ENCODE measurements at regions of chr1 and their contacts with region 1.

Region 1: GRCh38 chr1:109773146-109773899 is 9.6 kb upstream of the EPS8L3 start:
- DNase-seq: peak; percentile 90
- ATAC-seq: peak; percentile 89
- H3K4me3 ChIP-seq: no peak overlapping the region
- H3K27ac ChIP-seq: no peak overlapping the region
- H3K4me1 ChIP-seq: no peaks in the 10 kb centered on the region
- H3K27me3 ChIP-seq: no peaks in the 10 kb centered on the region

Region 2: DNA sequence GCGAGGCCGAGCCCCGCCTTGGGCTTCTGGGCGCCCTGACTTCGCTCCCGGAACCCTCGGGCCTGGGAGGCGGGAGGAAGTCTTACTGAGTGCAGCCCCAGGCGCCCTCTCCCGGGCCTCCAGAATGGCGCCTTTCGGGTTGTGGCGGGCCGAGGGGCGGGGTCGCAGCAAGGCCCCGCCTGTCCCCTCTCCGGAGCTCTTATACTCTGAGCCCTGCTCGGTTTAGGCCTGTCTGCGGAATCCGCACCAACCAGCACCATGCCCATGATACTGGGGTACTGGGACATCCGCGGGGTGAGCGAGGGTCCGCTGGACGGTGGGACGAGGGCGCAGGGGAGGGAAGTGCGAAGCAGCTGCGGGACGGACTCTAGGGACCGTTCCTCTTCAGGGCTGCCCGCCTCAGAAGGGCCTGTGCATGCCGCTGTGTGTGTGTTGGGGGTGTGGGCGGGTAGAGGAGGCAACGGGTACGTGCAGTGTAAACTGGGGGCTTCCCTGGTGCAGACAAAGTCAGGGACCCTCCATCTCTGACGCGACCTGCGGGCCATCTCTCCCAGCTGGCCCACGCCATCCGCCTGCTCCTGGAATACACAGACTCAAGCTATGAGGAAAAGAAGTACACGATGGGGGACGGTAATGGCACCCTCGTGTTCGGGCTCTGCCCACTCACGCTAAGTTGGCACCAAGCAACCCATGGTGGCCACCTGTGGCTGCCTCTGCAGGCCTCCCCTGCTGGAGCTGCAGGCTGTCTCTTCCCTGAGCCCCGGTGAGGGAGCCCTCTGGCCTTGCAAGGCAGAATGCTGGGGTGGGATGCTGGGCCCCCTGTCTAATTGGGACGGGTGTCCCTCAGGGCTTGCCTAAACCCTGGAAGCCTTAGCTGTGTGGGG is 85.5 kb before region 1 on chr1 and contains the start of gene GSTM1:
- intact Hi-C with region 1: no loop called
- DNase-seq: peak in 1 of 2 donors; percentile 93
- ATAC-seq: no peak
- H3K4me3 ChIP-seq: peak within 1 kb of the TSS in 1 of 2 donors; percentile 37
- H3K27ac ChIP-seq: peak within 1 kb of the TSS in 1 of 2 donors; percentile 66
- H3K4me1 ChIP-seq: no peaks in the 10 kb centered on the region
- H3K27me3 ChIP-seq: no peaks in the 10 kb centered on the region
- total RNA-seq, gene GSTM1: 63.8 TPM in 1 of 2 donors, not detected in the other

Region 3: GRCh38 chr1:109959974-109960744 is 186.8 kb after region 1 on chr1:
- intact Hi-C with region 1: no loop called
- DNase-seq: no peak
- ATAC-seq: no peak
- H3K4me3 ChIP-seq: no peak overlapping the region
- H3K27ac ChIP-seq: peak overlapping the region in 1 of 2 donors; percentile 21
- H3K4me1 ChIP-seq: peaks cover 0 to 7% of the 10 kb centered on the region in 2 donors
- H3K27me3 ChIP-seq: no peaks in the 10 kb centered on the region

Region 4: DNA sequence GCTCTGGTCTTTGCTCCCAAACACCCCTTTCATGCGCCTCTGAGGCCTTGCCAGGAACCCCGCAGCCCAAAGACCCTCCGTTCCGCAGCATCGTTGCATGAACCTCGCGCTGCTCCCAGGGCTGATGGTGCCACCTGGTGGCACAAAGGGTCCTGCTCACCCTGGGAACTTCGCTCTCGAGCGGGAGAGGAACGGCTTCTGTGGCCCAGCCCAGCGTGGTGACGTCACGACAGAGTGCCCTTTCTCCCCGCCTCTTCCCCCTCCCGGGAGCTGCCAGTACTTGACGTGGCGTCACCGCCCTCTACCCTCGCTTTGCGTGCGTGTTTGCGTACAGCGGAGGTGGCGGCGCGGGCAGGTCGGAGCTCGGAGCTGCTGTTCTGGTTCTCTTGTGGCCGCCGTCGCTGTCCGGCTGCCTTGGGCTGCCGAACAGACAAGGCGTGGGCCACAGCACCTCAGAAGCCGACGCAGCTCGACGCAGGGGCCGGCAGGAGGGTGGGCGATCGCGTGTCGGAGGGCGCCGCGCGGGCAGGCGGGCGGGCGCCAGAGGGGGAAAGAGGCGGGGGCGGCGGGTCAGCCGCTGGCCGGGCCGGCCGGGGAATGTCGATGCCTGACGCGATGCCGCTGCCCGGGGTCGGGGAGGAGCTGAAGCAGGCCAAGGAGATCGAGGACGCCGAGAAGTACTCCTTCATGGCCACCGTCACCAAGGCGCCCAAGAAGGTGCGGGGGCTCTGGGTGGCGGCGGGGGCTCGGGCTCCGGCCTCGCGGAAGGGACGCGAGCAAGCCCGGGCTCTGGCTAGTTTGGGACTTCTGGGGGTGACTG is 211.3 kb after region 1 on chr1 and contains the start of gene AHCYL1:
- intact Hi-C with region 1: loop called (anchors 1 kb)
- DNase-seq: peak; percentile 100
- ATAC-seq: peak; percentile 98
- H3K4me3 ChIP-seq: peak within 1 kb of the TSS; percentile 2 to 65
- H3K27ac ChIP-seq: peak within 1 kb of the TSS; percentile 32 to 82
- H3K4me1 ChIP-seq: no peaks in the 10 kb centered on the region
- H3K27me3 ChIP-seq: no peaks in the 10 kb centered on the region
- total RNA-seq, gene AHCYL1: 69.0 to 79.0 TPM

Measured in aorta (tissue), 5 donors.